ENCODE measurements at regions of chr10 and their contacts with region 1.

Region 1: DNA sequence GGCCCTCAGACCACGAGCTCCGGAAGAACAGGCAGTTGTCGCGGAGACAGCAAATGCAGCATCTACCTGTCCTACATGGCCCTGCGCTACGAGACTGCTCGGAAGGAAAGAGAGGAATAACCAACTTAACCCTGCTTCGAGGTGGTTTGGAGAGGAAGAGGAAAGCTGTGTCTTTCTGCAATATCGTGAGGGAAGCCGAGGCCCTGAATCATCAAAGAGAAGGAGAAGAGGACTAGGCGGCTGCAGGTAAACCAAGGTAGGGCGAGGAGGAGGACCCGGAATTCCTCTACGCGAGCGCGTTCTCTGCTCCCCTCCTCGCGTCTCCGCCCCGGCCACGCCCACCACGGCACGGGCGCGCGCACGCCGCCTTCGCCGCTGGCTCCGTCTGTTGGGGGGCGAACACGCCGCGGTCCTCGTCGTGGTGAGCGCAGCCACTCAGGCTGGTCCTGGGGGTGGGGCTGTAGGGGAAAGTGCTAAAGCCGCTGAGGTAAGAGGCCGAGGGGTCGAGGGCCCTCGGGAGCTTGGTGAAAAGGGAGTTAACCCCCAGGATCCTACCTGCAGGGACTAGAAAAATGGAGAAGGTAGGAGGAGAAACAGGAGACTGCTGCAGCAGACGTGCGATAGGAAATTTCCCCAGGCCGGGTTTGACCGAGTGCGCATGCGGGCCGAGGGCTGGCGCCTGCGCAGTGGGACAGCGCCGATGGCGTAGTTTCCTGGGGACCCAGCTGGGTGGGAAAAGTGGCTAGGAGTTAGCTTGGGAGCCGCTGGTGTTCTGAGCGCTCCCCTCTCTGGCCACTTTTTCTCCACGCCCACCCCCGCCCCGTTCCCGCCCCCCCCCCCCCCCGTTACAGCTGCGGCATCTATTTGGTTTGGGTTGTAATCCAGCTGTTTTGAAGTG is at the starts of genes ANAPC16 and ASCC1:
- DNase-seq: peak; percentile 98
- ATAC-seq: peak; percentile 83
- H3K4me3 Mint-ChIP-seq: peak within 1 kb of the TSS; percentile 96
- H3K27ac Mint-ChIP-seq: peak within 1 kb of the TSS; percentile 99
- H3K4me1 Mint-ChIP-seq: peaks cover 62% of the 10 kb centered on the region
- H3K27me3 Mint-ChIP-seq: no peaks in the 10 kb centered on the region
- CTCF ChIP-seq: no peak
- total RNA-seq, gene ANAPC16: 128 and 137 TPM in 2 replicates
- total RNA-seq, gene ASCC1: 42.6 and 42.9 TPM in 2 replicates

Region 2: GRCh38 chr10:71812016-71812912 is 403.6 kb before region 1 on chr10:
- CTCF ChIA-PET with region 1: no interaction called
- POLR2A ChIA-PET with region 1: no interaction called
- intact Hi-C with region 1: no loop called
- DNase-seq: peak; percentile 79
- ATAC-seq: peak; percentile 94
- H3K4me3 Mint-ChIP-seq: no peak overlapping the region
- H3K27ac Mint-ChIP-seq: no peak overlapping the region
- H3K4me1 Mint-ChIP-seq: peaks cover 2% of the 10 kb centered on the region
- H3K27me3 Mint-ChIP-seq: no peaks in the 10 kb centered on the region
- CTCF ChIP-seq: no peak

Region 3: DNA sequence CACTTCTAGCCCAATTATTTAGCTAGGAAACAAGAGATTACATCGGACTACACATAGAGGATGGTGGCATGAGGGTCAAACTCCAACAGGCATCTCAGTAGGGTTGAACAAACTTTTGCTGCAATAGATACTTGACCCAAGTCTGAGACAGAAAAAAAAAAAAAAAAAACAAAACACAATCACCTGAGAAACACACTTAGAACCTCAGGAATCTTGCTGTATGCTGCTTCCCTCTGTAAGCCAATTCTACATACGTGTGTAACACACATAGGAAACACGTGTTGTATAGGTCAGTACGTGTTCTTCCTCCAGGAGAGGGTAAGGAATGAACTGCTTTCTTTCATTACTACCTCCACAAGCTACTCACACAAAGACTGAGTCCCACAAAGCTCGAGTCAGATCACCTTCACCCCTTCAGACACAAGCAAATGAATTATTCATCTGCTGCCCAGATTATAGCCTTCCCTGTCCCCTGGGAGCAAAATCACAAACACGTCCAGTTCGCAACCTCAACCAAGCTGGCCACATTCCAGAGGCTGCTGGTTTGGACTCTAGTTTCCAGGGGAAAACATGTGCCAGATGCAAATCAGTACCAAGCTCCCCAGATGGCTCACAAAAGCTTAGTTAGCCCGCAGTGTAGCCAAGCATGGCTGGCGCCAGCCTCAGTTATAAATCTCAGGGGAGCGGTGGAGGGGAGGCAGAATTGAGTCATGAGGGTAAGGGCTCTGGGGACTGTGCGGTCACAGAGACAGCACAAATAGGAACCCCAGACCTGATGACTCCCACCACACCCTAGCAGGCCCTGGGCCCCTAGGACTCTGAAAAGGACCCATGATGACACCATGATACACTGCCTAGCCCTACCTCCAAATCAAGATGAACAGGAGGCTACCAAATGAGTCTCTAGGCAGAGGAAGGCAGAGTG is 380.0 kb before region 1 on chr10:
- CTCF ChIA-PET with region 1: no interaction called
- POLR2A ChIA-PET with region 1: interaction called, 3 read pairs
- intact Hi-C with region 1: loop called (anchors 2 kb)
- DNase-seq: peak; percentile 84
- ATAC-seq: peak; percentile 92
- H3K4me3 Mint-ChIP-seq: peak overlapping the region; percentile 79
- H3K27ac Mint-ChIP-seq: peak overlapping the region; percentile 95
- H3K4me1 Mint-ChIP-seq: peaks cover 88% of the 10 kb centered on the region
- H3K27me3 Mint-ChIP-seq: no peaks in the 10 kb centered on the region
- CTCF ChIP-seq: no peak

Region 4: DNA sequence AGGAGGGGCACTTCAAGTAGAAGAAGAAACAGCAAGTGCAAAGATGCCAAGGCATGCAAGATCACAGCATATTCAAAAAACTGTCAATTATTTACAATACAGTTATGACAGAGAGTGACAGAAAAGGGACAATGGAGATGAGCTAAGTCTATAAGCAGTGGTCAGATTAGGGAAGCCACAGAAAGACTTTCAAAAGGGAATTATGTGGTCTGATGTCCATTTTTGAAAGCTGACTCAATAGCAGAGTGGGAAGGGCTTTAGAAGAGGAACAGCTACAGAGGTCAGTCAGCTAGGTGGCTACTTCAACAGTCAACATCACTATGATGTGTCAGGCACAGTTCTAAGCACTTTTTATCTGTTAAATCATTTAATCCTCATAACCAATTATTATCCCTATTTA is 82.4 kb before region 1 on chr10:
- CTCF ChIA-PET with region 1: no interaction called
- POLR2A ChIA-PET with region 1: interaction called, 14 read pairs
- intact Hi-C with region 1: no loop called
- DNase-seq: no peak
- ATAC-seq: no peak
- H3K4me3 Mint-ChIP-seq: no peak overlapping the region
- H3K27ac Mint-ChIP-seq: peak overlapping the region; percentile 6
- H3K4me1 Mint-ChIP-seq: peaks cover 33% of the 10 kb centered on the region
- H3K27me3 Mint-ChIP-seq: no peaks in the 10 kb centered on the region
- CTCF ChIP-seq: no peak

Region 5: DNA sequence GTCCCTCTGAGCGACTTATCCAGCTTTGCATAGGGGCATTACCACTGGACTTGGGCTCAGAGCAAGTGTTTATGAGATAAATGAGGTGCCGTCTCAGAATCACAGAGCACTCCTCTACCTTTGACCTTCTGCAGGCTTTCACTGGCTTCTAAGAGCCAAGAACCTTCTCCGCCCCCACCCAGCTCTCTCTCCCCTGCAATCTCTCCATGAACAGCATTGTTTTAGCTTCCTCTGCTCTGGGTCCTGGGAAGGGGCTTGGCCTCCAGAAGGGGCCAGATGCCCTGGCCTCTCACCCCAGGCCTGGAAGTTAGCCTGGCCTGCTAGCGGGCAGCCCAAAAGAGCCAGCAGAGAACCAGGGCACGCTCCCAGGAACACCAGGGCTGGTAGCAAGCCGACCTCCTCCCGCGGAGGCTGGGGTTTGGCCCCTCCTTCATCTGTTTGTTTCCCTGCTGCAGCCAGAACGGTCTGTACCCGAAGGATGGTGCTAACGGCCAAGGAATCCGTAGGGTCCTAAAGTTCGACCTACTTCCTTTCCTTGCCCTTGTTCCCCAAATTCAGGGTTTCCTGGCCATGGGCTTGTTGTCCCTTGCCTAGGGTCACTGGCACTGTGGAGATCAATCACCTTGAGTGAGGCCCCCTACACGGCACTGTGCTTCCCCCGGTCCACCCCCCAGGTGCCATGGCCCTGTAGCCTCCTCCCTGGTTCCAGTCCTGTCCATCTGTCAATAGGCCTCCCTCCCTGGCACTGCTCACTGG is 39.1 kb after region 1 on chr10:
- CTCF ChIA-PET with region 1: no interaction called
- POLR2A ChIA-PET with region 1: interaction called, 41 read pairs
- intact Hi-C with region 1: no loop called
- DNase-seq: no peak
- ATAC-seq: no peak
- H3K4me3 Mint-ChIP-seq: no peak overlapping the region
- H3K27ac Mint-ChIP-seq: peak overlapping the region; percentile 83
- H3K4me1 Mint-ChIP-seq: peaks cover 76% of the 10 kb centered on the region
- H3K27me3 Mint-ChIP-seq: no peaks in the 10 kb centered on the region
- CTCF ChIP-seq: no peak

Region 6: GRCh38 chr10:72297968-72298773 is 82.3 kb after region 1 on chr10:
- CTCF ChIA-PET with region 1: interaction called, 4 read pairs
- POLR2A ChIA-PET with region 1: interaction called, 217 read pairs
- intact Hi-C with region 1: loop called (anchors 1 kb)
- DNase-seq: peak; percentile 89
- ATAC-seq: peak; percentile 72
- H3K4me3 Mint-ChIP-seq: peak overlapping the region; percentile 86
- H3K27ac Mint-ChIP-seq: peak overlapping the region; percentile 100
- H3K4me1 Mint-ChIP-seq: peaks cover 73% of the 10 kb centered on the region
- H3K27me3 Mint-ChIP-seq: no peaks in the 10 kb centered on the region
- CTCF ChIP-seq: no peak

Region 7: GRCh38 chr10:72692057-72692910 is 476.4 kb after region 1 on chr10 and contains the start of gene MCU:
- CTCF ChIA-PET with region 1: no interaction called
- POLR2A ChIA-PET with region 1: no interaction called
- intact Hi-C with region 1: loop called (anchors 5 kb)
- DNase-seq: peak; percentile 90
- ATAC-seq: peak; percentile 96
- H3K4me3 Mint-ChIP-seq: peak within 1 kb of the TSS; percentile 90
- H3K27ac Mint-ChIP-seq: peak within 1 kb of the TSS; percentile 81
- H3K4me1 Mint-ChIP-seq: peaks cover 44% of the 10 kb centered on the region
- H3K27me3 Mint-ChIP-seq: no peaks in the 10 kb centered on the region
- CTCF ChIP-seq: no peak
- total RNA-seq, gene MCU: 13.8 and 15.5 TPM in 2 replicates

Region 8: GRCh38 chr10:73591935-73592699 is 1376.2 kb after region 1 on chr10:
- CTCF ChIA-PET with region 1: no interaction called
- POLR2A ChIA-PET with region 1: no interaction called
- intact Hi-C with region 1: no loop called
- DNase-seq: no peak
- ATAC-seq: peak; percentile 71
- H3K4me3 Mint-ChIP-seq: peak overlapping the region; percentile 61
- H3K27ac Mint-ChIP-seq: peak overlapping the region; percentile 47
- H3K4me1 Mint-ChIP-seq: peaks cover 13% of the 10 kb centered on the region
- H3K27me3 Mint-ChIP-seq: no peaks in the 10 kb centered on the region
- CTCF ChIP-seq: no peak